Activated T-helper 1 cell treated with anti-CD3 and anti-CD28 coated beads, Interleukin-12 subunit alpha, Interleukin-12 subunit beta, Interleukin-2, Interleukin-4 antibody, amounts not matched to agents 30 ng/mL and 10 ng/mL and 1 ng/mL, durations not matched to agents 14 hours and 24 hours and 36 hours (primary cell): ENCODE measurements at regions of chr3 and their contacts with region 1.

Region 1: DNA sequence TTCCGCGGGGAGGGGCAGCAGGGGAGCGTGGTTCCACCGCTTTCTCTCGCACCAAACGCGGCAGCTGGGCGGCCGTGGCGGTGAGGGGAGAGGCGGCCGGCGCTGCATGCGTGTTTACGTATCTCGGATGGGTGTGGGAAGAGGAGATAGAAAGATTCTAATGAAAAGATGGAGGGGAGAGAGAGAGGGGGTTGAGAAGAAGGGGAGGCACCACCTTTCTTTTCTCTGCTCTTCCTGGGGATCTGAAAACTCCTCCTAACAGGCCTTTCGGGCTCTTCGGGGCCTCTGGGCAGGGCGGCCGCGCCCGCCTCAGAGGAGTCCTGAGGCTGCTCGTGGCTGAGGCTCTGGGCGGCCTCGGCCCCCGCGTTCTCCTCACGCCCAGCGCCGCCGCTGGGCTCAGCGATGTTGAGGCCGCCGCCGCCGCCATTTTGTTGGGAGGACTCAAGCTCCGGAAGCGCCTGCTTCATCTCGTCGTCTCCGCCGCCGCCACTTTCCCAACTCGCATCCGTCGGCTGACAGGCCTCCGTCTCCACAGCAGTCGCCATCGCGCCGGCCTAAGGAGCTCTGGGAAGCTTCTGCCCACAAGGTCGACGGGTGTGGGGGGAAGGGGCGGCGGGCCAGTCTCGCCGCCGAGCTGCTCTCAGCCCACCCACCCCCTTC is 473 bp downstream of the TASOR start:
- DNase-seq: peak; percentile 77
- H3K4me3 Mint-ChIP-seq: peak overlapping the region; percentile 97
- H3K27ac Mint-ChIP-seq: peak overlapping the region; percentile 96
- H3K4me1 Mint-ChIP-seq: peaks cover 45% of the 10 kb centered on the region
- H3K27me3 Mint-ChIP-seq: peaks cover 2% of the 10 kb centered on the region

Region 2: DNA sequence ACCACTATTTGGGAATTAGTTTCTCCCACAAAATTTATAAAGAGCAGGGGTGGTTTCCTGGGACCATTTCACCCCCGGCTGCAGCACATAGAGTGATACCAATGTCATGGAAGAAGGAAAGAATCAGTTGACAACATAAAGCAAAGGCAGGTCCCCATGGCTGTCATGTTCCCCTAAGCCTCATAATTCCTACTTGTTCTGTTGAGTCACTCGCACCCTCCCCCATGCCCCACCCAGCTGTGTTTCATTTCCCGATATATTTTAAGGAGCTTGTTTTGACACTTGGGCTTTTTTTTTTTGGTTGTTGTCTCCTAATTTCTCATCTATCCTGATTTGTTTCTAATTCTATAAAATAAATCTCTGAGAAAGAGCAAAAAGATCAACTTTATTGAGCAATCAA is 239.2 kb before region 1 on chr3:
- intact Hi-C with region 1: no loop called
- DNase-seq: no peak
- H3K4me3 Mint-ChIP-seq: no peak overlapping the region
- H3K27ac Mint-ChIP-seq: no peak overlapping the region
- H3K4me1 Mint-ChIP-seq: no peaks in the 10 kb centered on the region
- H3K27me3 Mint-ChIP-seq: no peaks in the 10 kb centered on the region

Region 3: DNA sequence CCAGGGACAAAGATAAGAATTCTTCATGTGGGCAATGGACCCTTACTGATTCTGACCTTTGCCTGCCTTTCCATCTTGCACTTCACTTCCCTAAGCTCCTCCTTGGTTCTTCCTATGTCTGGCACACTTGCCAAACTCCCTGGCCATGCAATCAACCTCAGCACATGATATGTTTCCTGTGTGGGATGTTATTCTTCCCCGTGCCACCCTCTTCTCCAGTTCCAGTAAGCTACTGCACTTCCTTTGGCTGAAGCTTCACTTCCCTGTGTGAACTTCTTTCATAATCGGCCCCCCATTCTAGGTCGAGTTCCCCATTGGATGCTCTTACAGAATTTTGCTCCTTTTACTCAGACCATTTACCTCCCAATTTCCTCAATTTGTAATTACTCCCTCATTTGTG is 11.2 kb after region 1 on chr3:
- intact Hi-C with region 1: loop called (anchors 1 kb)
- DNase-seq: no peak
- H3K4me3 Mint-ChIP-seq: peak overlapping the region; percentile 54
- H3K27ac Mint-ChIP-seq: no peak overlapping the region
- H3K4me1 Mint-ChIP-seq: peaks cover 37% of the 10 kb centered on the region
- H3K27me3 Mint-ChIP-seq: no peaks in the 10 kb centered on the region

Region 4: DNA sequence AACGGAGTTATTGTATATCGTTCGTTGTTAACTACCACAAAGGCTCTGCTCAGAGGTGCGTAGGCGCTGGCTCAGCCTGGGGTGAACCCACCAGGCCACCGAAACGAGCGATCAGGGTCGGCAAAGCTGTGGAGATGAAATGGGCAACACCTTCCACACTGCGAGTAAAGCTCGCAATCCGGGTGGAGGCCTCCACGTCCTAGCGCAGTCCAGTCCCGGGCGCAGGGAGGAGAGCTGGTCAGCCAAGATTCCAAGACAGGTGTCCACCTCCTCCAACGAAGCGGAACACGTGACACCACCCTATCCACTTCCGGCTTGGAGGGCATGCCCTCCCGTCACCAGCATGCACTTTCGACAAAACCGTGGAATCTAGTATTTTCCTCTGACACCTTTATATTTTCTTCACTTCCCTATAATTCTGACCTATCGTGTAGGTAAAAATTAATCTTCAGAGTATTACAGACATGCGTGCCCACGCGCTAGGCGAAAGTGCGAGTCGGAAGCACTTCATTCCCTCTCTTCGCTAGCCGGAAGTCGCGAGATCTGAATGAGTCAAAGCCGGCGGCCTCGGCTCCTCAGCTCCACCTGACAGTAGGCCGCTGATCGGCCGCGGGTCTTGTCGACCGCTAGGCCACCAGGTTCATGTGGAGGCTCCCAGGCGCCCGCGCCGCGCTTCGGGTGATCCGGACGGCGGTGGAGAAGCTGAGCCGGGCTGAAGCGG is 873.3 kb after region 1 on chr3 and contains the start of gene PDE12:
- intact Hi-C with region 1: loop called (anchors 10 kb)
- DNase-seq: peak; percentile 78
- H3K4me3 Mint-ChIP-seq: peak within 1 kb of the TSS; percentile 100
- H3K27ac Mint-ChIP-seq: peak within 1 kb of the TSS; percentile 100
- H3K4me1 Mint-ChIP-seq: peaks cover 47% of the 10 kb centered on the region
- H3K27me3 Mint-ChIP-seq: no peaks in the 10 kb centered on the region
- total RNA-seq, gene PDE12: 34.7 and 34.9 TPM in 2 replicates